ENCODE measurements at regions of chr2 and their contacts with region 1.

Region 1: GRCh38 chr2:231674587-231675338 is 33.6 kb upstream of the PTMA start:
- DNase-seq: peak; percentile 75
- ATAC-seq: peak; percentile 71
- H3K4me3 Mint-ChIP-seq: no peak overlapping the region
- H3K27ac Mint-ChIP-seq: peak overlapping the region; percentile 14
- H3K4me1 Mint-ChIP-seq: peaks cover 14% of the 10 kb centered on the region
- H3K27me3 Mint-ChIP-seq: no peaks in the 10 kb centered on the region

Region 2: DNA sequence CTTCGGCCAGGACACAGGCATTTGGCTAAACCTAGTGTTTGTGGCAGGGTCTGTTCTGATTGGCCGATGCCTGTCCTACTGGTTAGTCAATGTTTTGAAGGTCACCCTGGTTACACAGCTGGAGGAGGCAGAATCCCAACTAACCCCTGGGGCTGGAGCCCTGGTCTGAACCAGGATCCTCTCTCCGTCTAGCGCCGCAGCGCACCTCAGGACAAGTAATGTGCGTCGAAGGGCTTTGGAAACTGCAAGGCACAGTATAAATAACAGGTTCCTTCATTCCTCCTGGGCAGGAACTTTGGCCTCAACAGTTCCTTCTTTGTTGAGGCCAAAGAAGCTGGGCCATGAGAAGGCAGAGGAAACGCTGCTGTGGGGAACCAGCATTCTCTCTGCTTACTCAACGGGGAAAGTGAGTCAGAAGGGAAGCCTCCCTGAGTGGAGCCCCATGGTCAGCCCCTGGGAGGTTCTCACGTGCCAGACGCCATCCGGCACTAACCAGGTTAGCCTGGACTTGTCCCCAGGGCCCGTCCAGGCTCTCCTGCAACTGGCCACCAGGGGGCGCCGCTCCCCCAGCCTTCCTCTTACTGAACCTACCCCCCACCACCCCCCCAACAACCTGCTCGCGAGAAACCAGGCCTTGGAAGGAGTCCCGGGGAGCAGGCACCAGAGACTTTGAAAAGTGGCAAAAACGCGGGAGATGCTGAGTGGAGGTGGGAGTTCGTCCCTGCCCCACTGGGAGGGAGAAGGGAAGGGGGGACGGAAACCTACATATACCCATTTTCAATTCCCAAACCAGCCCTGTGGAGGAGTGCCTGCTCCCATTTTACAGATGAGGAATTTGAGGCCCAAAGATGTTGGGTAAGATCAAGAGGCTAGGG is 62.3 kb before region 1 on chr2:
- CTCF ChIA-PET with region 1: interaction called, 261 read pairs
- DNase-seq: peak; percentile 97
- ATAC-seq: peak; percentile 73
- H3K4me3 Mint-ChIP-seq: peak overlapping the region; percentile 50
- H3K27ac Mint-ChIP-seq: peak overlapping the region; percentile 96
- H3K4me1 Mint-ChIP-seq: peaks cover 32% of the 10 kb centered on the region
- H3K27me3 Mint-ChIP-seq: no peaks in the 10 kb centered on the region

Region 3: DNA sequence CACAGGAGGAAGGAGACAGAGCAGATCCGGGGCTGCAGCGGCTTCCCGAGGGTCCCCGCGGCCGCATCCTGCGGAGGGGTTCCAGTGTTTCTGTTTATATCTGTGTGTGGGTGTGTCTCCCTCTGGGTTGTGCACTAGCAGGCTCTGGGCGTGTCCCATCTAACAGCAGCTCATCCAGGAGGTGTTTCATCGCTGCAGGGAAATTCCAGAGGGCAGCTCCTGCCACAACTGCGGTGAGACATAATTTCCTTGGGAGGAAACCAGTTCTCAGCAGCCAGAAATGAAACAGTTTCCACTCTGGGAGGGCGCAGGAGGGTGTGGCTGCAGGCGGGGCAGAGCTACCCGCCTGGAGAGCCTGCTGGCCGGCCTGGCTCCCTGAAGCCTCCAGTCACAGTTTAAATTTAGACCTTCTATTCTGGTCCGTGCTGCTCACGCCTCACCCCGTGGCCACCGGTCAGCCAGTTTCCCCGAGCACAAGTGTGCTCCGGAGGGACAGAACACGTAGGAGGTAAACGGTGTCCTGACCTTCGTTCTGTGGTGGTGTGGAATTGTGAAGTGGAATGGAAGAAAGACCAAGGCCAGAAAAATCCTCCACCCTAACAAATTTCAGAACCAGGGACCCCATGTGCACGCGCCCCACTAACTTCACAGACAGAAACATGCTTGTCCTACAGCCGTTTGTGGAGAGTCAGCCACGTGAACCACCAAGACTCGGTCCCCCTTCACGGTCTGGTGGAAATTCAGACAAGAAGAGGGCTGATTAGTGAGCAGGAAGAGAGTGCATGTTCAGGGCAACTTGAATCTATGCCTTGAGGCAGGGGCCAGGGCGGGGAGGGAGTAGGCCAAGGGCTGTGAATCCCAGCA is 31.9 kb before region 1 on chr2:
- CTCF ChIA-PET with region 1: interaction called, 65 read pairs
- DNase-seq: peak; percentile 71
- ATAC-seq: peak; percentile 83
- H3K4me3 Mint-ChIP-seq: peak overlapping the region; percentile 67
- H3K27ac Mint-ChIP-seq: peak overlapping the region; percentile 76
- H3K4me1 Mint-ChIP-seq: peaks cover 12% of the 10 kb centered on the region
- H3K27me3 Mint-ChIP-seq: peaks cover 4% of the 10 kb centered on the region

Region 4: DNA sequence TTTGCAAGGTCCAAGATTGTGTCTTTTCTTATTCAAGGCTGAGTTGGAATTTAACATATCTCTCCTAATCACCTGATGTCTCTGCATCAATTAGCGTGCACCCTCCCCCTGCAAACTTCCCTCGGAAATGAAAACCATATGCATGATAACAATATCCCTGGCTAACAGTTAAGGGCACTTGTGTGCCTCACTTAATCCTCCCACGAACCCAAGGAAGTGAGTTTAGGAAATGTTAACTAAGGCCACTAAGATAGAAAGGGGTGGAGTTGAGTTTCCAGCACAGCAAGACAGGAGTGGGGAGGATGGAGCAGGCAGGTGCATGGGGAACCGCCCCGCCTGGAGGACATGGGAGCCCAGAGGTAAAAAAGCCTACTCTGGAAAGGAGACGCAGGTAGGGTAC is 18.9 kb before region 1 on chr2:
- CTCF ChIA-PET with region 1: interaction called, 38 read pairs
- DNase-seq: no peak
- ATAC-seq: no peak
- H3K4me3 Mint-ChIP-seq: no peak overlapping the region
- H3K27ac Mint-ChIP-seq: no peak overlapping the region
- H3K4me1 Mint-ChIP-seq: no peaks in the 10 kb centered on the region
- H3K27me3 Mint-ChIP-seq: no peaks in the 10 kb centered on the region

Region 5: GRCh38 chr2:231687133-231687852 is 12.5 kb after region 1 on chr2:
- CTCF ChIA-PET with region 1: interaction called, 101 read pairs
- DNase-seq: peak; percentile 71
- ATAC-seq: peak; percentile 83
- H3K4me3 Mint-ChIP-seq: no peak overlapping the region
- H3K27ac Mint-ChIP-seq: no peak overlapping the region
- H3K4me1 Mint-ChIP-seq: peaks cover 3% of the 10 kb centered on the region
- H3K27me3 Mint-ChIP-seq: peaks cover 4% of the 10 kb centered on the region

Region 6: GRCh38 chr2:231713730-231714430 is 39.1 kb after region 1 on chr2:
- CTCF ChIA-PET with region 1: interaction called, 680 read pairs
- DNase-seq: peak; percentile 94
- ATAC-seq: peak; percentile 29
- H3K4me3 Mint-ChIP-seq: peak overlapping the region; percentile 33
- H3K27ac Mint-ChIP-seq: peak overlapping the region; percentile 90
- H3K4me1 Mint-ChIP-seq: peaks cover 27% of the 10 kb centered on the region
- H3K27me3 Mint-ChIP-seq: no peaks in the 10 kb centered on the region

Region 7: GRCh38 chr2:231786177-231786916 is 111.6 kb after region 1 on chr2 and contains the start of gene COPS7B:
- CTCF ChIA-PET with region 1: interaction called, 12 read pairs
- DNase-seq: peak; percentile 88
- ATAC-seq: peak; percentile 77
- H3K4me3 Mint-ChIP-seq: peak within 1 kb of the TSS; percentile 92
- H3K27ac Mint-ChIP-seq: peak within 1 kb of the TSS; percentile 83
- H3K4me1 Mint-ChIP-seq: peaks cover 56% of the 10 kb centered on the region
- H3K27me3 Mint-ChIP-seq: no peaks in the 10 kb centered on the region
- total RNA-seq, gene COPS7B: 47.3 to 54.4 TPM

Measured in activated CD8-positive, alpha-beta memory T cell treated with anti-CD3 and anti-CD28 coated beads, Interleukin-2, amount 10 ng/mL, durations not matched to agents 7 days and 5 days (primary cell).